ENCODE measurements at regions of chr11 and their contacts with region 1.

Region 1: DNA sequence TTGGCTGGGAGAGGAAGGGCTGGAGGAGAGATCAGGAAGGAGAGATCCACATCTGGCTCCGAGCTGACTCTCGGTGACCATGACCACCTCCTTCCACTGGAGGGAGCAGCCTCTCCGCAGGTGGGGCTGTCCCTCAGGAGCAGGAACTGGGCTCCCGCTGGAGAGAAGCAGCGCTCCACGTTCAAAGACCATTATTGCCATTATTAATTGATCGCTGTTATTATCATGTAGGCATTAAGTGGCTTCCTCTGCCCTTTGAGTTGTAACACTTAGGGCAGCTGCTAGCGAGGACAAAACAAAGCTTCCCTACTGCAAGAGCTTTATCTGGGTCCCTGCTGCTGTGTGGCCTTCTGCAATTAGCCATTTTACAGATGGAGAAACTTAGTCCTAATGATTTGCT is 251.9 kb downstream of the ST3GAL4 start:
- DNase-seq: peak; percentile 76
- ATAC-seq: peak; percentile 83
- H3K4me3 Mint-ChIP-seq: peak overlapping the region; percentile 42
- H3K27ac Mint-ChIP-seq: no peak overlapping the region
- H3K4me1 Mint-ChIP-seq: peaks cover 40% of the 10 kb centered on the region
- H3K27me3 Mint-ChIP-seq: peaks cover 6% of the 10 kb centered on the region
- CTCF ChIP-seq: peak; percentile 52

Region 2: GRCh38 chr11:126473269-126473668 is 134.1 kb before region 1 on chr11:
- CTCF ChIA-PET with region 1: no interaction called
- POLR2A ChIA-PET with region 1: no interaction called
- DNase-seq: no peak
- ATAC-seq: no peak
- H3K4me3 Mint-ChIP-seq: no peak overlapping the region
- H3K27ac Mint-ChIP-seq: no peak overlapping the region
- H3K4me1 Mint-ChIP-seq: no peaks in the 10 kb centered on the region
- H3K27me3 Mint-ChIP-seq: no peaks in the 10 kb centered on the region; the same call in 1 of the 2 replicates
- CTCF ChIP-seq: no peak

Region 3: GRCh38 chr11:126523441-126524205 is 83.8 kb before region 1 on chr11:
- CTCF ChIA-PET with region 1: no interaction called
- POLR2A ChIA-PET with region 1: no interaction called
- DNase-seq: no peak
- ATAC-seq: no peak
- H3K4me3 Mint-ChIP-seq: no peak overlapping the region
- H3K27ac Mint-ChIP-seq: no peak overlapping the region
- H3K4me1 Mint-ChIP-seq: peaks cover 7% of the 10 kb centered on the region; the same call in 1 of the 2 replicates
- H3K27me3 Mint-ChIP-seq: no peaks in the 10 kb centered on the region; the same call in 1 of the 2 replicates
- CTCF ChIP-seq: no peak

Region 4: DNA sequence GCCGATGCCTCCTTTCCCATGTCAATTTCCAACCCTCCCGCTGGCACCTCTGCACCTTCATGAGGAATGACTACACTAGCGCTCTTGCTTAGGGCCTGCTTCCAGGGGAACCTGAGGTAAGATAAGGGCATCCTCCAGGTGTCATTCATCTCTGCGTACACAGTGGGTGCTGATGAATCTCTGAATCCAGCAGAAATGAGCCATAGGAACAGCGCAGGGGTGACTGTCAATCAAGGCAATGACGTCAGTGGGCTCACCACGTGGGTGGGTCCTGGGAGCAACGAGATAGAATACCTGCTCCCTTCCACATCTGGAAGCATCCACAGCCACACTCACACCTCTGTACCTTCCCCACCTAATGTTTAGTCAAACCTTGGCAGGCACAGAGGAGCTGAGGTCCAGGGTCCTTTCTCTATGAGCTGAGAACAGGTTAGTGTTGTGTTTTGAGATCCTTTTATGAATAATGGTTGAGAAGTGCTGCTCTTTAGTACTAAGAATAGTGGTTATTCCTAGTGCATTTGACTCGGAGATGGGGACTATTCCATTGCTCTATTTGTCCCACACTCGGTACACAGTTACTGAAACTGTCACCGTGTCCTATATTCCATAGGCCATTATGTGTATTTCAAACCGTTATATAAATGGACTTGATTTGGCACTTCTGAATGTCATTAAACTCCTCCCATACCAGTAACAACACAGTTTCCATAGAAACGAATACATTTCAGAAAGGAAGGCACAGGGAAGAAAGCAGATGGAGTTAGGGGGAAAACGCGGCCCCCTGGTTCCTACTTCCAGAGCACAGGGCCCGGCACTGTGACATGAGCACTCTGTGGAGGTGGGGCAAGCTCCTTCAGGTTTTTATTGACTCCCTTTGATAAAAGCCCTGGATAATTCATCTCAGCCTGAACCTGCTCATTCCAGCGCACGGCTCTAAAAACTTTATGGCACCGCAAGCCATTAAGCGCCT is 58.5 kb before region 1 on chr11:
- CTCF ChIA-PET with region 1: no interaction called
- POLR2A ChIA-PET with region 1: no interaction called
- DNase-seq: no peak
- ATAC-seq: no peak
- H3K4me3 Mint-ChIP-seq: no peak overlapping the region
- H3K27ac Mint-ChIP-seq: no peak overlapping the region
- H3K4me1 Mint-ChIP-seq: peaks cover 36% of the 10 kb centered on the region
- H3K27me3 Mint-ChIP-seq: no peaks in the 10 kb centered on the region
- CTCF ChIP-seq: no peak

Region 5: DNA sequence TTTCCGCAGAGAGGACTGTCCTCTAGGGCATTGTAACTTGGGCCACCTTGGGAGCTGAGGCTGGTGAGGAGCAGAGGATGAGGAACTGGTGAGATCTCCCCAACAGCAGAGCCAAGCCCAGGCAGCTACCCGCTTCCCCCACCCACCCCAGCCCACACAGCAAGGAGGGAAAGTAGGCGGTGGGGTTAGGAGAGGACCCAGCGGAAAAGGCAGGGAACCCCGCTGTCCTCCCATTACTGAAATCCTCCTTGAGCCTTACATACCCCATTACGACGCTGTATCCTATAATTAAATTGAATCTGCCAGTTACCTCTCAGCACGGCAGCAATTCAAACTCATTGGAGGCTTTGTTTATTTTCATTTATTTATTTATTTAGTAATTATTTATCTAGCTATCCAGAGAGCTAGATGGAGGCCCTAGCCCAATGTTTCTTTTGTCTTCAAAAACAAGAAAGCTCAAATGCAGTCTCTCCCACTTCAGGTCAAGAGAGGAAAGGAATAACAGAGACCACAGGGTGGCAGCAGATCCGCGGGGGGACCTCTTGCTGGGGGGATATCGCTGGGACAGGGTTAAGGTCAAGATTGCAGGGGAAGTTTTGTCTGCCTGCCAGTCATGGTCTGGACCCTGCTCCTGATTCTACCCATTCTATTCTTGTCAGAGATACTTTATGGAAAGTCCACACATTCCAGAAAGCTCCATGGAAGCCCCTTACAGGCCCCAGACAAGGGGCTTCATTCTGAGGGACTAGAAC is 33.9 kb before region 1 on chr11:
- CTCF ChIA-PET with region 1: interaction called, 21 read pairs
- POLR2A ChIA-PET with region 1: interaction called, 5 read pairs
- DNase-seq: peak; percentile 58
- ATAC-seq: peak; percentile 86
- H3K4me3 Mint-ChIP-seq: no peak overlapping the region
- H3K27ac Mint-ChIP-seq: no peak overlapping the region
- H3K4me1 Mint-ChIP-seq: peaks cover 16% of the 10 kb centered on the region
- H3K27me3 Mint-ChIP-seq: peaks cover 2% of the 10 kb centered on the region
- CTCF ChIP-seq: peak; percentile 32; the same call in 1 of the 2 replicates

Region 6: DNA sequence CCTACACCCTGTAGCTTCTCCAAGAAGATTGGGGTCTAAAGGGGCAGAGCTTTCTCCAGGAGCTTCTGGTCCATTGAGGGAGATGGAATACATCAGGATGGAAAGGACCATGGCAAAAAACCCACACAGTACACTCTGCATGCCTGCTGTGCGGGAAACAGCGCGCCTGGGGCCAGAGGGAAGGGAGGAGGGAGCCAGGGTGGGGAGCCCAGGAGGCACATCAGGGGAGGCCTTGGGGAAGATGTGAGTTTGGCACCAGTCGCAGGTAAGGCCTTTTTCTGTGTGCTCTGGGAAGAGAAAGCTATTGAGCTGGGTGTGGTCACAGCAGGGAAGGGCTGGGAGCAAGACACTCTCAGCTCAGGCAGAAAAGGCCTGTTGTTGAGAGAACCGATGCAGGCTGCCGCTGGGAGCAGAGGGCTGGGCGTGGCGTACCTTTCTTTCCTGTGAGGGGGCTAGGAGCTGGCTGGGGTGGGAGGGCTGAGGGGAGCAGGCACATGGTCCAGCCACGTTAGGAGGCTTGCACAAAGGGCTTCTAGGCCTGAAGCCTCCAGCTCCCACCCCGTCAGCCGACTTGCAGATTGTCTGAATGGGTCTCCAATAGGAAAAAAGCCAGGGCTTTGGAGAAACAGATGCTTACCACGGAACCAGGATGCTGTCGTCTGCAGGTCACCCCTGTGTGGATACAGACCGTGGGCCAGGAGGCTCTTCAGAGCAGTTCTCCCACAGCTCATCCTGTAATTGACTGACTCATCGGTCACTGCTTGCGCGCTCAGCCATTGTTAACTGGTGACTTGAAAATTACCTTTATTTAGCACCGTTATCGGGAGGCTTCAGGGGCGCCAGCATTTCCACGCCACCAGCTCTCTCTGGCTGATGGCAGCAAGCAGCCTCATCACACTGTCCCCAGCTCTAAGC is 14.6 kb before region 1 on chr11:
- CTCF ChIA-PET with region 1: interaction called, 37 read pairs
- POLR2A ChIA-PET with region 1: no interaction called
- DNase-seq: peak; percentile 36
- ATAC-seq: peak; percentile 76
- H3K4me3 Mint-ChIP-seq: no peak overlapping the region
- H3K27ac Mint-ChIP-seq: no peak overlapping the region
- H3K4me1 Mint-ChIP-seq: peaks cover 17% of the 10 kb centered on the region
- H3K27me3 Mint-ChIP-seq: no peaks in the 10 kb centered on the region
- CTCF ChIP-seq: no peak

Region 7: DNA sequence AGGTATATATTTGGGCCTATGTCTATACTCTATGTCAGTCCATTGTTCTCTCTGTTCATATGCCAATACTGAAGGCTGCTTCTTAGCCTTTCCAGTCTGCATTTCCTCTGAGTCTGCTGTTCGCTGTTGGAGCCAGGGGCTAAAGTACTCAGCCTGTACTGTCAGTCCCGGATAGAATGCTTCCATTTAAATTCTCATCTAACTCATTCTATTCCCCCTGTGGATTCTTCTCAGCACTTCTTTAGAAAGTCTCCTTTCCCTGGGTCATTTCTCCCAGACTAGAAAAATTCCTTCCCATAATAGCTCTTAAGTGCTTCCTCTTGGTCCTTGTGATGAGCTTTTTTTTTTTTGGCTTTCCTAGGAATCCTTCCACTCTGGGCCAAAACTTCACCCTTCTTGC is 100.1 kb after region 1 on chr11:
- CTCF ChIA-PET with region 1: interaction called, 12 read pairs
- POLR2A ChIA-PET with region 1: interaction called, 6 read pairs
- DNase-seq: no peak
- ATAC-seq: peak; percentile 29
- H3K4me3 Mint-ChIP-seq: no peak overlapping the region
- H3K27ac Mint-ChIP-seq: no peak overlapping the region
- H3K4me1 Mint-ChIP-seq: peaks cover 34% of the 10 kb centered on the region
- H3K27me3 Mint-ChIP-seq: no peaks in the 10 kb centered on the region
- CTCF ChIP-seq: no peak

Region 8: DNA sequence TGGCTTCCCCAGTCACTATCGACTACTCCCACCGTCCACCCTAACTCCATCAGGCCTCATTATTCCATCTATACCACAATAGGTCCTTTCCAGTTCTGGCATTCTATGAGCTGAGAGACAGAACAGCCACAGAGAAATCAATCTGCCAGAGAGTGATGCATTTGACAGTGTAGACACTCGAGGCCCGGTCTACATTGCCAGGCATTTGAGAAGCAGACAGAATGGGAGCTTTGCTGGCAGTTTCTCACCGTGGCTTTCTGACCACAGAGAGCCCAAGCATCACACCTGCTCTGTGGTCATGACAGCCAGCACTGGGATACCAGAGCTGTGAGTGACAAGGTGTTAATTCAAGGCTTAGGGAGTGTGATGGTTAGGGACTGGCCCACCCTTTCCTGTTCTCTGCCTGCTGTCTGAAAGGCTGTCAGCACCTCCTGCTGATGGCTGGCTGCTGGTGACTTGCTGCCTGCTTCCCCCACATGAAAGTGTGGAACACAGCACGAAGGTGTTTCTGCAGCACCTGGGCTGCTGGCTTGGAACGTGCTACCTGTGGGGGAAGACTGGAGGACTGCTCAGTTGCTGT is 255.4 kb after region 1 on chr11:
- CTCF ChIA-PET with region 1: interaction called, 11 read pairs
- POLR2A ChIA-PET with region 1: no interaction called
- DNase-seq: peak; percentile 39
- ATAC-seq: peak; percentile 80
- H3K4me3 Mint-ChIP-seq: no peak overlapping the region
- H3K27ac Mint-ChIP-seq: no peak overlapping the region
- H3K4me1 Mint-ChIP-seq: no peaks in the 10 kb centered on the region
- H3K27me3 Mint-ChIP-seq: no peaks in the 10 kb centered on the region
- CTCF ChIP-seq: no peak